Caco-2 (cell line): ENCODE measurements at regions of chr15 and their contacts with region 1.

Region 1: GRCh38 chr15:42392309-42393024 is 33.2 kb downstream of the CAPN3 start:
- DNase-seq: peak; percentile 96 to 98
- H3K4me3 ChIP-seq: peak overlapping the region; percentile 30
- H3K4me3 Mint-ChIP-seq: peak overlapping the region; percentile 70
- H3K27ac Mint-ChIP-seq: peak overlapping the region; percentile 95
- H3K4me1 ChIP-seq: peaks cover 36% of the 10 kb centered on the region
- H3K4me1 Mint-ChIP-seq: peaks cover 14% of the 10 kb centered on the region
- H3K27me3 ChIP-seq: no peaks in the 10 kb centered on the region
- H3K27me3 Mint-ChIP-seq: no peaks in the 10 kb centered on the region
- CTCF ChIP-seq: no peak

Region 2: GRCh38 chr15:42273102-42273899 is 119.2 kb before region 1 on chr15 and contains the starts of genes GANC and TMEM87A:
- CTCF ChIA-PET with region 1: interaction called, 4 read pairs
- POLR2A ChIA-PET with region 1: interaction called, 6 read pairs
- intact Hi-C with region 1: loop called (anchors 1 kb)
- DNase-seq: peak; percentile 96 to 98
- H3K4me3 ChIP-seq: peak within 1 kb of the TSS; percentile 75
- H3K4me3 Mint-ChIP-seq: peak within 1 kb of the TSS; percentile 83
- H3K27ac Mint-ChIP-seq: peak within 1 kb of the TSS; percentile 99
- H3K4me1 ChIP-seq: peaks cover 30% of the 10 kb centered on the region
- H3K4me1 Mint-ChIP-seq: peaks cover 15% of the 10 kb centered on the region
- H3K27me3 ChIP-seq: no peaks in the 10 kb centered on the region
- H3K27me3 Mint-ChIP-seq: no peaks in the 10 kb centered on the region
- CTCF ChIP-seq: no peak
- total RNA-seq, gene GANC: 11.8 and 12.6 TPM in 2 replicates
- total RNA-seq, gene TMEM87A: 33.6 and 38.4 TPM in 2 replicates

Region 3: DNA sequence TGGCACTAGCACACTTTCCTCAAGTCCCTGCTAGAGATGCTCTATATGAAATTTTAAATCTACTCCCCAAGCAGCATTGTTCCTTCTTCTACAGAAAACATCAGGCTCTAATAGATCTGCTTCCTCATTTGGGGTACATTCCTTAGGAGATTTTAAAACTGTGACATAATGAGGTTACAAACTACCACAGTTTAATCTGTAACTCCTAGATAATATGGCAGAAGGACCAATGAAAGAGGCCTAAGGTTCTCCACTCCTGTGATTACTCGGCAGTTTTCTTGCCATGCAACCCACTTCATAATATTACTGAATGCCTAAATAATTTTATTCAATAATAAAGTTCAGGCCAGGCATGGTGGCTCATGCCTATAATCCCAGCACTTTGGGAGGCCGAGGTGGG is 82.4 kb after region 1 on chr15:
- CTCF ChIA-PET with region 1: no interaction called
- POLR2A ChIA-PET with region 1: no interaction called
- intact Hi-C with region 1: loop called (anchors 5 kb)
- DNase-seq: no peak
- H3K4me3 ChIP-seq: no peak overlapping the region
- H3K4me3 Mint-ChIP-seq: no peak overlapping the region
- H3K27ac Mint-ChIP-seq: no peak overlapping the region
- H3K4me1 ChIP-seq: no peaks in the 10 kb centered on the region
- H3K4me1 Mint-ChIP-seq: peaks cover 12% of the 10 kb centered on the region
- H3K27me3 ChIP-seq: no peaks in the 10 kb centered on the region
- H3K27me3 Mint-ChIP-seq: no peaks in the 10 kb centered on the region
- CTCF ChIP-seq: no peak